T-cell (primary cell): ENCODE measurements at regions of chr17 and their contacts with region 1.

Region 1: GRCh38 chr17:74961657-74962490 is 10.7 kb downstream of the HID1 start:
- DNase-seq: peak; percentile 51 to 91 (median 77)
- ATAC-seq: peak; percentile 69 to 79 (median 72)
- H3K4me3 ChIP-seq: no peak overlapping the region
- H3K4me3 Mint-ChIP-seq: no peak overlapping the region
- H3K27ac ChIP-seq: no peak overlapping the region
- H3K27ac Mint-ChIP-seq: no peak overlapping the region
- H3K4me1 ChIP-seq: peaks cover 0 to 13% of the 10 kb centered on the region in 2 experiments
- H3K4me1 Mint-ChIP-seq: peaks cover 8 to 20% (median 9%) of the 10 kb centered on the region in 3 donors
- H3K27me3 ChIP-seq: peaks cover 0 to 24% of the 10 kb centered on the region in 2 experiments
- H3K27me3 Mint-ChIP-seq: no peaks in the 10 kb centered on the region

Region 2: DNA sequence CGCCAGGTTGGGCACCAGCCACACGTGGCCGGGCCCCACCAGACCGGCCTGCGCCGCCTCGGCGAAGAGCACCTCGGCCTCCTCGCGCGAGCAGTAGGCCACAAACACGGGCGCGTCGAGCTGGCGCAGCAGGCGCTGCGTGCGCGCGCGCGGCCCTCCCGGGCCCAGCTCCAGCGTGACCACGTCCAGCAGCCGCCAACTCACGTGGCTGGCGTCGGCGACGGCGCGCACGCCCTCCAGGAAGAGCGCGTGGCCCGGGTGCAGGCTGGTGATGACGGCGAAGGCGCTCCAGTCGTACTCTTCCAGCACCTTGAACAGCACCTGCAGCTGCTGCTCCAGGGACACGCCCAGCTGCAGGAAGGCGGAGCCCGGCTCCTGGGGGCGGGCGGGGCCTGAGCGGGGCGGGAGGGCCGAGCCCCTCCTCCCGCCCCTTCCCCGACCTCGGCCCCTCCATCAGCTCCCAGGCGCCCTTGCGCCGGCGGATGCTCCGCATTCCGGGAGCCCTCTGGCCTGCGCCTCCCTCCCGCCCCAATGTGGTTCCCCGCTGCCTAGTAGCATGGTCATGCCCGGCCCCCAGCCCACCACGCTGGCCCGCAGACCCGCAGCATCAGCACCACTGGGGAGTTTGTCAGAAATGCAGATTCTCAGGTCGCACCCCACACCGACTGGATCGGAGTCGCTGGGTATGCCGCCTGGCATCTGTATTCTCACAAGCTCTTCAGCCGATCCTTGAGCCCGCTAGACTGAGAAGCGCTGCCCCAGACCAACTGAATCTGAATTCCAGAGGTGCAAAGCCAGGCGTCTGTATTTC is 109.4 kb before region 1 on chr17:
- CTCF ChIA-PET with region 1: no interaction called
- POLR2A ChIA-PET with region 1: no interaction called
- DNase-seq: peak in 34 of 35 experiments; percentile 21 to 82 (median 50)
- ATAC-seq: peak; percentile 90 to 92 (median 90)
- H3K4me3 ChIP-seq: peak overlapping the region; percentile 39 to 47
- H3K4me3 Mint-ChIP-seq: peak overlapping the region; percentile 66 to 75 (median 70)
- H3K27ac ChIP-seq: no peak overlapping the region
- H3K27ac Mint-ChIP-seq: peak overlapping the region in 1 of 2 donors; percentile 11
- H3K4me1 ChIP-seq: peaks cover 0 to 15% of the 10 kb centered on the region in 2 experiments
- H3K4me1 Mint-ChIP-seq: peaks cover 10 to 18% (median 12%) of the 10 kb centered on the region in 3 donors
- H3K27me3 ChIP-seq: peaks cover 9 to 75% of the 10 kb centered on the region in 2 experiments
- H3K27me3 Mint-ChIP-seq: peaks cover 40 to 53% of the 10 kb centered on the region in 2 donors

Region 3: GRCh38 chr17:74916136-74916850 is 45.6 kb before region 1 on chr17:
- CTCF ChIA-PET with region 1: no interaction called
- POLR2A ChIA-PET with region 1: no interaction called
- DNase-seq: no peak
- ATAC-seq: no peak
- H3K4me3 ChIP-seq: no peak overlapping the region
- H3K4me3 Mint-ChIP-seq: no peak overlapping the region
- H3K27ac ChIP-seq: no peak overlapping the region
- H3K27ac Mint-ChIP-seq: no peak overlapping the region
- H3K4me1 ChIP-seq: peaks cover 0 to 5% of the 10 kb centered on the region in 2 experiments
- H3K4me1 Mint-ChIP-seq: peaks cover 0 to 2% (median 2%) of the 10 kb centered on the region in 3 donors
- H3K27me3 ChIP-seq: peaks cover 0 to 62% of the 10 kb centered on the region in 2 experiments
- H3K27me3 Mint-ChIP-seq: peaks cover 16 to 39% of the 10 kb centered on the region in 2 donors

Region 4: GRCh38 chr17:74937064-74938051 is 24.5 kb before region 1 on chr17:
- CTCF ChIA-PET with region 1: no interaction called
- POLR2A ChIA-PET with region 1: no interaction called
- DNase-seq: no peak
- ATAC-seq: no peak
- H3K4me3 ChIP-seq: no peak overlapping the region
- H3K4me3 Mint-ChIP-seq: no peak overlapping the region
- H3K27ac ChIP-seq: no peak overlapping the region
- H3K27ac Mint-ChIP-seq: no peak overlapping the region
- H3K4me1 ChIP-seq: peaks cover 0 to 4% of the 10 kb centered on the region in 2 experiments
- H3K4me1 Mint-ChIP-seq: peaks cover 0 to 8% (median 0%) of the 10 kb centered on the region in 3 donors
- H3K27me3 ChIP-seq: peaks cover 7 to 88% of the 10 kb centered on the region in 2 experiments
- H3K27me3 Mint-ChIP-seq: peaks cover 42 to 70% of the 10 kb centered on the region in 2 donors

Region 5: DNA sequence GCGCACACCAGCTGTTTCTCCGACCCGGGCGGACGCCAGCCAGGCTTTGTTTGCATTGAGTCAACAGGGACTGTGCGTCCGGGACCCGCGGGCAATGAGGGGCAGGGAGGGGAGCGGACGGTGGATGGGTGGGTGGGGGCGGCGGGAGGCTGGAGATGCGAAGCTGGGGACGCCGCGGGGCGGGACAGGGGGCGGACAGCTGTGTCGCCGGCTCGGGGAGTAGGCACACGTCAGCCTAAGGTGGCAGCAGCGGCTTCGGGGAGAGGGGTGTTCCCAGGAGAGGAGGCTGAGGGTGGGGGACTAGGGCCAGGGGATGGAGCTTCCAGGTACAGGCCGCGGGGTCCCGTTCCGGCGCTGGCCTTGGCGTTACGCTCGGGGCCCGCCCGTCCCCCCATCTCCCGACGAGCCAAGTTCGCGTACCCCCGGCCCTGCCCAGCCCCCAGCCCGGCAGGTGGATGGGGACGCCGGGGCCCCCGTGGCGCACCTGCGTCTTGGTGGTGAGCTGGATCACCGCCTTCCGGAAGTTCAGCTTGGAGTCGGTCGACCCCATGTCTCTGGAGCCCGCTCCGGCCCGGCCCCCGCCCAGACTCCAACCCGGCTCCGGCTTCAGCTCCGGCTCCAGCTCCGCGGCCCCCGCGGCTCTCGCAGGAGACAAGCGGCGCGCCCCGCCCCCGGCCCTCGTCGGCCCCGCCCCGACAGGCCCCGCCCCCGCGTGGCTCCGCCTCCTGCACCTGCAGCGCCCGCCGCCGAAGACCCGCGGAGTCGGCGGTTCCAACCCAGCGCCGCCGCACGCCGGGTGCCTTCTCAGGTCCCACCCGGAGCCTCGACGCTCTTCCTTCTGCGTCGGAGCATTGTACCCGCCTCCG is 10.5 kb after region 1 on chr17 and contains the start of gene HID1:
- CTCF ChIA-PET with region 1: interaction called, 3 to 13 read pairs
- POLR2A ChIA-PET with region 1: interaction called in 1 of 2 experiments, 7 read pairs
- DNase-seq: peak; percentile 56 to 88 (median 74)
- ATAC-seq: peak; percentile 90 to 93 (median 92)
- H3K4me3 ChIP-seq: peak within 1 kb of the TSS; percentile 53 to 59
- H3K4me3 Mint-ChIP-seq: peak within 1 kb of the TSS; percentile 80 to 96 (median 82)
- H3K27ac ChIP-seq: no peak within 1 kb of the TSS
- H3K27ac Mint-ChIP-seq: peak within 1 kb of the TSS; percentile 24 to 61
- H3K4me1 ChIP-seq: peaks cover 2 to 21% of the 10 kb centered on the region in 2 experiments
- H3K4me1 Mint-ChIP-seq: peaks cover 6 to 13% (median 6%) of the 10 kb centered on the region in 3 donors
- H3K27me3 ChIP-seq: peaks cover 0 to 41% of the 10 kb centered on the region in 2 experiments
- H3K27me3 Mint-ChIP-seq: peaks cover 0 to 19% of the 10 kb centered on the region in 2 donors
- total RNA-seq, gene HID1: 12.7 to 21.0 (median 14.5) TPM

Region 6: GRCh38 chr17:75012346-75013091 is 50.6 kb after region 1 on chr17 and contains the start of gene MRPL58:
- CTCF ChIA-PET with region 1: interaction called, 29 to 46 read pairs
- POLR2A ChIA-PET with region 1: interaction called in 1 of 2 experiments, 8 read pairs
- DNase-seq: peak; percentile 56 to 87 (median 73)
- ATAC-seq: peak; percentile 94 to 98 (median 96)
- H3K4me3 ChIP-seq: peak within 1 kb of the TSS; percentile 67 to 94
- H3K4me3 Mint-ChIP-seq: peak within 1 kb of the TSS; percentile 92 to 94 (median 93)
- H3K27ac ChIP-seq: peak within 1 kb of the TSS; percentile 72
- H3K27ac Mint-ChIP-seq: peak within 1 kb of the TSS; percentile 85 to 86
- H3K4me1 ChIP-seq: peaks cover 6 to 20% of the 10 kb centered on the region in 2 experiments
- H3K4me1 Mint-ChIP-seq: peaks cover 33 to 39% (median 39%) of the 10 kb centered on the region in 3 donors
- H3K27me3 ChIP-seq: peaks cover 0 to 4% of the 10 kb centered on the region in 2 experiments
- H3K27me3 Mint-ChIP-seq: no peaks in the 10 kb centered on the region
- total RNA-seq, gene MRPL58: 15.6 to 30.6 (median 26.6) TPM

Region 7: GRCh38 chr17:75154195-75155106 is 192.6 kb after region 1 on chr17 and contains the start of gene JPT1:
- CTCF ChIA-PET with region 1: interaction called in 1 of 2 experiments, 10 read pairs
- POLR2A ChIA-PET with region 1: no interaction called
- DNase-seq: peak; percentile 93 to 98 (median 97)
- ATAC-seq: peak; percentile 97 to 99 (median 98)
- H3K4me3 ChIP-seq: peak within 1 kb of the TSS; percentile 92 to 96
- H3K4me3 Mint-ChIP-seq: peak within 1 kb of the TSS; percentile 90 to 95 (median 92)
- H3K27ac ChIP-seq: peak within 1 kb of the TSS; percentile 40
- H3K27ac Mint-ChIP-seq: peak within 1 kb of the TSS; percentile 81 to 84
- H3K4me1 ChIP-seq: peaks cover 15 to 23% of the 10 kb centered on the region in 2 experiments
- H3K4me1 Mint-ChIP-seq: peaks cover 28 to 37% (median 35%) of the 10 kb centered on the region in 3 donors
- H3K27me3 ChIP-seq: no peaks in the 10 kb centered on the region
- H3K27me3 Mint-ChIP-seq: no peaks in the 10 kb centered on the region
- total RNA-seq, gene JPT1: 28.3 to 55.8 (median 45.4) TPM

Region 8: GRCh38 chr17:75183999-75184867 is 222.4 kb after region 1 on chr17:
- CTCF ChIA-PET with region 1: no interaction called
- POLR2A ChIA-PET with region 1: interaction called in 1 of 2 experiments, 11 read pairs
- DNase-seq: no peak
- ATAC-seq: no peak
- H3K4me3 ChIP-seq: no peak overlapping the region
- H3K4me3 Mint-ChIP-seq: peak overlapping the region; percentile 81 to 89 (median 84)
- H3K27ac ChIP-seq: peak overlapping the region; percentile 98
- H3K27ac Mint-ChIP-seq: peak overlapping the region; percentile 97 to 98
- H3K4me1 ChIP-seq: peaks cover 20 to 23% of the 10 kb centered on the region in 2 experiments
- H3K4me1 Mint-ChIP-seq: peaks cover 34 to 40% (median 39%) of the 10 kb centered on the region in 3 donors
- H3K27me3 ChIP-seq: no peaks in the 10 kb centered on the region
- H3K27me3 Mint-ChIP-seq: no peaks in the 10 kb centered on the region

Region 9: DNA sequence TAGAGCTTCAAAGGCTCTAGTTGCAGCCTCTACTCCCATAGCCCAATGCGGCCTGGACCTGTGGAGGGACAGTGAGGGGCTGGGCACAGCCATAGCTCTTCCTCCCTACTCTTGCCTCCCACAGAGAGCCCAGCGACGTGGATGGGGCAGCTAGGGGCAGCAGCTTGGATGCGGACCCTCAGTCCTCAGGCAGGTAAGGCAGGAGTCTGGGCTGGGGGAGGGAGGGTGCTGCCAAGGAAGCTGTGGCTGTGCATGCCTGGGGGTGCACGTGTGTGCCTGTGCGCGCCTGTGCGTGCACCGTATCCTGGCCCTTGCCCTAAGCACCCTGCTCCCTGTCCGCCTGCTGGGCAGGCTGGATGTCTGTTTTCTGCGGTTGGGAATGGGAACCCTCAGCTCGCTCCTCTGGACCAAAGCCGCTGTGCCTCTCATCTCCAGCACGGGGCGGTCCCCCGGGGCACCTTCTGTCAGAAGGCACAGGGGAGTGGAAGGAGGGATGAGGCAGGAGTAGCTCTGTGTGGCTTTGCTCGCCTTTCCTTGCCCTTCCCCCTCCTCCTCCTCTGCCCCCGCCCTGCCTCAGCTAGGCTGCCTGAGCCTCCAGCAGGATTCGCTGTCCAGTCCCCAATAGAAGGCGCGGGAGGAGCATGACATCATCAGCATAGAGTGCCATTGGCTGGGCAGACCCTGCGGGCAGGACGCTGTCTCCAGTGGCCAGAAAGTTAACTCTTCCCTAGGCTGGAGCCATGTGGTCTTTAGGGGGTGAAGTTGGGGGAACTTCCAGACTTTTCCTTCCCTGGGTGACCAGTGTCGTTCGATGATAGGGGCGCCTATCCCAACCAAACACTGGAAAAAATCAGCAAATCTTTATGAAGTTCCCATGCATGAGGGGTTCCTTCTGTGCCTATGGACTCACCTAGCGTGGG is 1578.8 kb after region 1 on chr17:
- CTCF ChIA-PET with region 1: no interaction called
- POLR2A ChIA-PET with region 1: no interaction called
- DNase-seq: peak in 1 of 35 experiments; percentile 28
- ATAC-seq: peak in 2 of 4 experiments; percentile 25 to 50
- H3K4me3 ChIP-seq: no peak overlapping the region
- H3K4me3 Mint-ChIP-seq: no peak overlapping the region
- H3K27ac ChIP-seq: no peak overlapping the region
- H3K27ac Mint-ChIP-seq: no peak overlapping the region
- H3K4me1 ChIP-seq: peaks cover 0 to 14% of the 10 kb centered on the region in 2 experiments
- H3K4me1 Mint-ChIP-seq: peaks cover 3 to 11% (median 11%) of the 10 kb centered on the region in 3 donors
- H3K27me3 ChIP-seq: peaks cover 4 to 80% of the 10 kb centered on the region in 2 experiments
- H3K27me3 Mint-ChIP-seq: peaks cover 23 to 58% of the 10 kb centered on the region in 2 donors